Calu3 (cell line): ENCODE measurements at regions of chr1 and their contacts with region 1.

Region 1: DNA sequence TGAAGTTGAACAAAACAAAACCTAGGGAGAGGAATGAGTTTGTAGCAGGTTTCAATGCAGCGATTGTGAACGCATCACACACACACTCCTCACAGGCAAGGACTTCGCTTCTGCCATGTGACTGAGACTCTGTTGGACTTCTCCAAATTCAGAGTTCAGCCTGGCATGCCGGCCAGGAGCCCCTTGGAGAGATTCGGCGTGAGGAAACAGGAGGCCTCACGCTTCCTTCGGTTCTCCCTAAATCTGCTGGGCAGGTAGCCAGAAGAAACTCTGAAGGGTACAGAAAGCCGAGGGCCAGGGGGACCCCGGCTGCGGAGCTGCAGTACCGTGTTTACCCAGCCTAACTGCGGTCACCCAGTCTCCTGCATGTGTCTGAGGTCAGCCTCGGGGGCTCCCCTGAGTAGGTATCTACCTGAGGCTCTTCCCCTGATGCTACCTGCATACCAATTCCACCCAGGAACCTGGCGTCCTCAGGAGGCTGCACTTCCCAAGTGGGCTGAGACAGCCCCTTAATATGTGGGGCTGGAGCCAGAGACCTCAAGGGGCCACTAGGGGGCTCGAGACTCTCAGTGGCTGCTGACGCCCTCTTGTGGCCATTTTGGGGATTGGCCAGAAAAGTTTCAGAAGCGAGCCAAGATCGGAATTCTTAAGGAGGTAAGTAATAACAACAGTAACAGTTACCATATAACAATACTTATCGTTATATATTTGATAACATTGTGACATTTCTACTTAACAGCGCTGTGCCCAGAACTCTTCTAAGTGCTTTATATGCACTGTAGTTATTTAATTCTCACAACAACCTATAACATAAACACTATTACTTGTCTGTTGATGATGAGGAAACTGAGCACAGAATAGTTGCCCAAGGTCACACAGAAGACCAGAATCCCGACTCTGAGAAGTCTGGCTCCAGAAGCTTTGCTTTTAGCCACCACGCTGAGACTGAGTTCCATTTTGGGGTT is 2.7 kb upstream of the ANXA9 start:
- DNase-seq: peak; percentile 93
- H3K4me3 Mint-ChIP-seq: no peak overlapping the region
- H3K27ac Mint-ChIP-seq: no peak overlapping the region
- H3K4me1 Mint-ChIP-seq: peaks cover 54% of the 10 kb centered on the region
- H3K27me3 Mint-ChIP-seq: no peaks in the 10 kb centered on the region
- CTCF ChIP-seq: peak; percentile 100

Region 2: DNA sequence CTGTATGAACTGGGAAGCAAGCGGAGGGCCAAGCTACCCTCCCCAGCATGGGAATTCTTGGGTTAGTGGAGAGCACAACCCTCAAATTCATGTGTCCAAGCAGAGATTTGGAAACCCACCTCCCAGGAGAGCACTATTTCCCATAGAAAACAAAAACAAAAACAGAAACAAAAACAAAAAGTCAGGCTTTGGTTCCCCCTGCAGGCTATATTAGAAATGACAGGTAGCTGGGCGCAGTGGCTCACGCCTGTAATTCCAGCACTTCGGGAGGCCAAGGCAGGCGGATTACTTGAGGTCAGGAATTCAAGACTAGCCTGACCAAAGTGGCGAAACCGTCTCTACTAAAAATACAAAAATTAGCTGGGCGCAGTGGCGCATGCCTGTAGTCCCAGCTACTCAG is 16.5 kb after region 1 on chr1:
- CTCF ChIA-PET with region 1: interaction called, 32 read pairs
- intact Hi-C with region 1: loop called (anchors 1 kb)
- DNase-seq: peak; percentile 41
- H3K4me3 Mint-ChIP-seq: no peak overlapping the region
- H3K27ac Mint-ChIP-seq: no peak overlapping the region
- H3K4me1 Mint-ChIP-seq: no peaks in the 10 kb centered on the region
- H3K27me3 Mint-ChIP-seq: no peaks in the 10 kb centered on the region
- CTCF ChIP-seq: peak; percentile 90

Region 3: DNA sequence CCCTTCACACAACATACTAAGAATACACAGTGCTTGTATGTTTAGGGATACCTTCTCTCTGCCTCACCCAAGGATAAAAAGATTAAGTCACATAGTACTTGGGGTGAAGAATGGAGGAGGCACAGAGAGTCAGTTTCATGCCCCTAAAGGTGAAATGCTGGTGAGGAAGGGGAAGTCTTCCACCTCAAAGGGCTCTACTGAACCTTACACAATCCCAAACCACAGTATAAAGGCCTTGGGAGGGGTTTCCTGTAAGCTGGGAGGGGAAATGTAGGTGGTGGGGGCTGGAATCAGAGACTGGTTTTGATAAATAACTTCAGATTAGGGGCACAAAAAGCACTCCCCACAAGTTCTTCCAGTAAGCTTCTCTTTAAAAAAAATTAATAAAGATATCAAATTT is 23.8 kb after region 1 on chr1:
- CTCF ChIA-PET with region 1: interaction called, 23 read pairs
- intact Hi-C with region 1: no loop called
- DNase-seq: no peak
- H3K4me3 Mint-ChIP-seq: no peak overlapping the region
- H3K27ac Mint-ChIP-seq: no peak overlapping the region
- H3K4me1 Mint-ChIP-seq: peaks cover 28% of the 10 kb centered on the region
- H3K27me3 Mint-ChIP-seq: no peaks in the 10 kb centered on the region
- CTCF ChIP-seq: no peak